HepG2 (cell line): ENCODE measurements at regions of chr19 and their contacts with region 1.

Region 1: DNA sequence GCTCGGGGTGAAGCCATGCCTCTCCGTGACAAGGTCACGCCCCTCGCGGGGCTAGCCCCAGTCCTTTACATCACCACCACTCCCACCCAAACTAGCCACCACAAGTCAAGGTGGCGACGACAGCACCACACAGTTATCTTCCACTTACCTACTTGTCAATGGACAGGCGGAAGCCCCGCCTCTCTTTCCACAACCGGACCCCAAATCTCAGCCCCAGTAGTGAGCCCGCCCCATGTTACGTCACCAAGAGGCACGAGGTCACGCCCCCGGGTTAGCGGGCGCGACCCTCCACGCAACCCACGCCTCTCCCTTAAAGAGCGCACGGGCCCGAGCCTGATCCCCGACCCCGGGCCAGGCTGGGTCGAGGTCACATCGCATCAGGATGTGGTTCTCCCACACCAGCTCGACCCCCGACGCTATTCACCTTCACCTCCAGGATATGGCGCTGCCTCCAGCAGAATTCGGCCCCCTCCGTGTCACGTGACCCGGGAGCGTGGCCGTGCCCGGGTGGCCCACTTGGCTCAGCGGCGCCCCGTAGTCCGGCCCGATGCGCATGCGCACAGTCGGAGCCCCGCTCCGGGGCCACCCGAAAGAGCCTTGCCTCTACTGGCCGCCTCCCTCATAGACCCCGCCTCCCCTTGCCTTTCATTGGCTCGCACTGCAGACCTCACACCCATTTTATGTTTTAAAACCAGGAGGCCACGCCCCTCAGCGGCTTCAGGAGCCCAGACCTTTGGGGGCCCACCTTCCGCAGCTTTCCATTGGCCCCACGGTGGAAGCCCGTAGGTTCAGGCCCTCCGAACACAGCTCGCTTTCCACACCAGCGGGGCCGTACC is 18.2 kb downstream of the SYDE1 start:
- DNase-seq: peak; percentile 98
- ATAC-seq: peak; percentile 85
- H3K4me3 ChIP-seq: peak overlapping the region; percentile 75 to 89 (median 79)
- H3K27ac ChIP-seq: peak overlapping the region; percentile 91
- H3K4me1 ChIP-seq: peaks cover 36% of the 10 kb centered on the region
- H3K27me3 ChIP-seq: peaks cover 0 to 6% of the 10 kb centered on the region in 2 experiments; a peak in 2 of 5 replicates
- CTCF ChIP-seq: peak; percentile 45
- EP300 ChIP-seq: no peak
- POLR2A ChIP-seq: peak; percentile 70 to 77
- RAD21 ChIP-seq: peak; percentile 77

Region 2: DNA sequence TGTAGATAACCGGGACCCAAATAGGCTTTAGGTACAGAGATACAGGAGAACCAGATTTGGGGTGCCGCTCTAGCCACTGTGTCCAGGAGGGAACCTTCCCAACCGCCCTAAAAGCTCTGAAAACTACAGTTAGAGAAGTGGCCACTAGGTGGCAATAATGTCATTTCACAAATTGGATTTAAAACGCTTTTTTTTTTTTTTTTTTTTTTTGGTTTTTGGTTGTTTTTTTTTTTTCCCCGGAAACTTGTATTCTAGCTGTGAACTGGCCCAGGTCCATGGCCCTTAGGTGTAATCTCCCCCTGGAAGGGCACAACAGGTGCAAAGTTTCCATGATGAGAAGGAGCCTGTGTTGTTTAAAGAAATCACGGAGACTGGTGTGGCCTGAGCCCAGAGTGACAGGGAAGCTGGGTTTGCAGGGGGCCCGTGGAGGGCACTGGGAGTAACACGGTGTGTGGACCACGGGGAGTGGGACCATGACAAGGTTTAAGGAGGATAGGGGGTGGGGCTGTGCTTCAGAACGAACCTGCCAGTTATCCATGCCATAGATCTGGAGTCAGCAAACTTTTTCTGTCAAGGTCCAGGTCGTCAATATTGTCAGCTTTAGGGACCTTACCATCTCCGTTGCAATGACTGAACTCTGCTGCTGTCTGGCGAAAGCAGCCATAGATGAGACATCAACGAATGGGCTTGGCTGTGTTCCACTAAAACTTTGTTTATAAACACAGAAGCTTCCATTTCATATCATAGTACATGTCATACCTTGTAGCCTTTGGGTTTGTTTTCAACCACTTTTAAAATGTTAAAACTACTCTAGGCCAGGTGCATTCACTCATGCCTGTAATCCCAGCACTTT is 33.3 kb before region 1 on chr19:
- CTCF ChIA-PET with region 1: no interaction called
- POLR2A ChIA-PET with region 1: no interaction called
- in situ Hi-C with region 1: no loop called
- intact Hi-C with region 1: no loop called
- DNase-seq: peak; percentile 66
- ATAC-seq: peak; percentile 77
- H3K4me3 ChIP-seq: peak overlapping the region in 2 of 3 experiments; percentile 7 to 37; a peak in 3 of 6 replicates
- H3K27ac ChIP-seq: no peak overlapping the region
- H3K4me1 ChIP-seq: peaks cover 21% of the 10 kb centered on the region
- H3K27me3 ChIP-seq: peaks cover 0 to 9% of the 10 kb centered on the region in 2 experiments; a peak in 2 of 5 replicates
- CTCF ChIP-seq: peak; percentile 63
- EP300 ChIP-seq: no peak
- POLR2A ChIP-seq: no peak
- RAD21 ChIP-seq: no peak

Region 3: DNA sequence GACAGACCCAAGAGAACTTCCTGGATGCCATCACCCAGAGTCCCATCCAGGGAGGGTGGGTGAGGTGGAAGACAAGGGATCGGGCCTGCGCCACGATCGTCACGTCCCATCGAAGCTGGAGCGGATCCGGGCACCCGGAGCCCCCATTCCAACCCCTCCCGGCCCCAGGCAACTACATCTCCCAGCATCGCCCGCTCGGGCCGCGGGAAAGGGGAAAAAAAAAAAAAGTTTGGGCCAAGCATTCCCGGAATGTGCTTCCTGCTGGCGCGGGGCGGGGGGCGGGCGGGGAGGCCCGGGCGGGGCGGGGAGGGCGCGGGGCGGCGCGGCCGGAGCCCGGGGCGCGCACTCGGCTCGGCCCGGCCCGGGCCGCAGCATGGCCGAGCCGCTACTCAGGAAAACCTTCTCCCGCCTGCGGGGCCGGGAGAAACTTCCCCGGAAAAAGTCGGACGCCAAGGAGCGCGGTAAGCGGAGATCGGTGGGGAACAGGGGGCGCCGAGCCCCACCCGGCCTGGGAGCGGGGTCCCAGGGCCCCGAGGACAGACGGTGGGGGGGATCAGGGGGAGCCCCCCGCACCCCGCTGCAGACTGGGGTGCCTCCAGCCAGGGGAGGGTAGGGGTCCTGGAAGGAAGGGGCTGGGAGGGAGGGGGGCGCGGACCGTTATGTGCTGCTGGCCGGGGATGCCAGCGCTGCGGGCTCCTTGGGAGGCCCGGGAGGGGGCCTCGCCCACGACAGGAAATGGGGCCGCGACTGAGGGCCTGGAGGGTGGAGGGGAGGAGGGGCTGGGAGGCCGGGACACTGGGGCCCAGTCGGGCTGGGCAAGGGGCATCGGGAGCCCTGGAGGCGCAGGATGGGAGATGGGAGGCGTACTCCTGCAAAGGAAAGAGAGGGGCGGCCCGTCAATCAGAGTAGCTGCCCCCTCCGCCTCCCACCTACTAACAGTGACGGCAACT is 18.1 kb before region 1 on chr19 and contains the start of gene SYDE1:
- CTCF ChIA-PET with region 1: no interaction called
- POLR2A ChIA-PET with region 1: interaction called, 19 read pairs
- in situ Hi-C with region 1: no loop called
- intact Hi-C with region 1: no loop called
- DNase-seq: peak; percentile 50
- ATAC-seq: peak; percentile 53
- H3K4me3 ChIP-seq: peak within 1 kb of the TSS; percentile 80 to 84 (median 81)
- H3K27ac ChIP-seq: peak within 1 kb of the TSS; percentile 52
- H3K4me1 ChIP-seq: peaks cover 18% of the 10 kb centered on the region
- H3K27me3 ChIP-seq: no peaks in the 10 kb centered on the region
- CTCF ChIP-seq: no peak
- EP300 ChIP-seq: no peak
- POLR2A ChIP-seq: peak; percentile 21 to 60; a peak in 1 of 4 replicates
- RAD21 ChIP-seq: no peak
- total RNA-seq, gene SYDE1: 3.8 and 4.3 TPM in 2 replicates

Region 4: DNA sequence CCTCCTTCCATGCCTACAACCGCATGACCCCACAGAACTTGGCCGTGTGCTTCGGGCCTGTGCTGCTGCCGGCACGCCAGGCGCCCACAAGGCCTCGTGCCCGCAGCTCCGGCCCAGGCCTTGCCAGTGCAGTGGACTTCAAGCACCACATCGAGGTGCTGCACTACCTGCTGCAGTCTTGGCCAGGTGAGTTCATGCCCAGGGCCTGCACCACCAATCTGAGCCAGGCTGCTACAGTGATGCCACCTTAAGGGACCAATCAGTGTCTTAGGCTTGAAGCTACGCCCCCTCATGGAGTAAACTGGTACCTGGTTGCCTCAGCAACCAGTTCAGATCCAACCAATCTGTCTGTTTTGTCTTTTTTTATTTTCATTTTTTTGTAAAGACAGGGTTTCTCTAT is 13.1 kb before region 1 on chr19:
- CTCF ChIA-PET with region 1: no interaction called
- POLR2A ChIA-PET with region 1: interaction called, 19 read pairs
- in situ Hi-C with region 1: no loop called
- intact Hi-C with region 1: no loop called
- DNase-seq: peak; percentile 24
- ATAC-seq: no peak
- H3K4me3 ChIP-seq: no peak overlapping the region
- H3K27ac ChIP-seq: no peak overlapping the region
- H3K4me1 ChIP-seq: peaks cover 9% of the 10 kb centered on the region
- H3K27me3 ChIP-seq: no peaks in the 10 kb centered on the region
- CTCF ChIP-seq: peak; percentile 16; the same call in 1 of the 2 replicates
- EP300 ChIP-seq: no peak
- POLR2A ChIP-seq: no peak
- RAD21 ChIP-seq: no peak